ENCODE measurements at regions of chr1 and their contacts with region 1.

Region 1: DNA sequence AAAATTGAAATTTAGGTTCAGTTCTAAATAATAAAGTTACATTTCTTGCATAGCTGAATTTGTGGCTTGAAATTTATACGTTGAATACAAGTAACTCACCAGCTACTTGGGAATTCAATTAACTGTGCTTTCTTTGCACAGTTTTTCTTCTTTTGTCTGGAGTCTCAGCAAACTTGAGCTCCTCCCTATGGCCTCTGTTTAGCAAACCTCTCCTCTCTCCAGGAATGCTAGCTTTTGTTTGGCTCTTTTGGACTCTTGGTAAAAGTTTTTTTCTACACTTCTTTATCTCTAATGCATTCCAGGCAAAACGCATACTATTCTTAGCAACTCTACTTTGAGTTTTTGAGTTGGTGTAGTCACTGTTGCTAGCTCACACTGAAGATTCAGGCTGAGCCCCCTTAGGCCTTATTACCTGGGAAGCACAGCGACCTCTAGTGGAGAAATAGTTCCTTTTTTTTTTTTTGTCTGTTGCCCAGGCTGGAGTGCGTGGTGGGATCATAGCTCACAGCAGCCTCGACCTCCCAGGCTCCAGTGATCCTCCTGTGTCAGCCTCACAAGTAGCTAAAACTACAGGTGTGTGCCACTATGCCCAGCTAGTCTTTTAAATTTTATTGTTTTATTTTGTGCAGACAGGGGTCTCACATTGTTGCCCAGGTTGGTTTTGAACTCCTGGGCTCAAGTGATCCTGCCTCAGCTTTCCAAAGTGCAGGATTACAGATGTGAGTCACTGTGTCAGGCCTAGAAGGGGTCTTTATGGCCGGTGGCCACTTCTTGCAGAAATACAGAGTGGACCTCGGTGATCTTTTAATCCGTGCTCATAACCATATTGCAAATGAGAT is 61.7 kb downstream of the CASQ2 start:
- DNase-seq: peak; percentile 26
- H3K4me3 ChIP-seq: no peak overlapping the region
- H3K27ac ChIP-seq: no peak overlapping the region
- H3K27me3 ChIP-seq: peaks cover 9% of the 10 kb centered on the region
- CTCF ChIP-seq: peak; percentile 74

Region 2: DNA sequence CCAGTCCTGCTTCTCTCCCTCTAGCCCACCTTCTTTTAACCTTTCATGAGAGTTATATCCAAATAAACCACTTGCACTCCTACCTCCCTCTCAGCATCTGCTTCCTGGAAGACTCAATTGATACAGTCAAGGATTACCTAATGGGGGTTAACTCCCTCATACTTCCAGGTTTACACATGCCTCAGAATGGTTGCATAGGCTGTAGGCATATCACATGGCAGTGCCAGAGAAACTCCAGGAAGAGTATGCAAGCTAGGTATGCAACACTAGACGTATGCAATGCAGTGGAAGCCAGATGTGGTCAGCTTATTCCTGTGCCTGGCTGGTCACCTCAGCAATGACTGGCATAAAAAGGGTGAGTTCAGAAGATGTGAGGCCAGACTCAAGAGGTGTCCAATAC is 97.8 kb before region 1 on chr1:
- CTCF ChIA-PET with region 1: interaction called, 97 read pairs
- POLR2A ChIA-PET with region 1: interaction called, 4 read pairs
- DNase-seq: no peak
- H3K4me3 ChIP-seq: no peak overlapping the region
- H3K27ac ChIP-seq: no peak overlapping the region
- H3K27me3 ChIP-seq: peaks cover 16% of the 10 kb centered on the region
- CTCF ChIP-seq: no peak

Region 3: DNA sequence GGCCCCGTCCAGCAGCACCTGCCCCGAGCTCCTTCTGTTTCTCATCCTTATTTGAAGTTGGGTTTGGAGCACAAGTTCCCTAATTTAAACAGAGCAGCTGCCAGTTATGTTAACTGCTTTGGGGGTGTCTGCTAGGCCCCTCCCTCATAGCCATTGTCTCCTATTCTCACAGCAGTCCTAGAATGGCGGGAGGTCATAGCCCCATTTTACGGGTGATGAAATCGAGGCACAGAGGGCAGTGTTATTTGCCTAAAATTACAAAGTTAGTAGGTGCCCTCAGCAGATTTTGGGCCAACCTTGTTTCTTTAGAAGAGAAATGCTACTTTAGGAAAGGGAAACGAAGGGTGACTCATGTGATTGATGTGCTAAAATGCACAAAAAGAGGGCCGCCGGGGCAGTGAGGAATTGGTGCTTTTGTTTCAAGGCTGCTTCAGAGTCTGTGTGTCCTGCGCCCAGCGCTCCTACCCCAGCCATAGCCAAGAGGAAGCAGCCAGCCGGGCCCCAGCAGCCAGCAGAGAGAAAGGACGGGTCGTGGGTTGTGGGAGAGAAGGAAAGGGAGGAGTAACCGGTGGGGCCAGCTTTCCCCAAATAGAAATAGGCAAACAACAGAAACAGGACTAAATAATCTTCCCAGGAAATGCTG is 52.0 kb before region 1 on chr1:
- CTCF ChIA-PET with region 1: interaction called, 16 read pairs
- POLR2A ChIA-PET with region 1: no interaction called
- DNase-seq: no peak
- H3K4me3 ChIP-seq: no peak overlapping the region
- H3K27ac ChIP-seq: no peak overlapping the region
- H3K27me3 ChIP-seq: no peaks in the 10 kb centered on the region
- CTCF ChIP-seq: no peak

Region 4: GRCh38 chr1:115679141-115679611 is 27.6 kb before region 1 on chr1:
- CTCF ChIA-PET with region 1: interaction called, 28 read pairs
- POLR2A ChIA-PET with region 1: no interaction called
- DNase-seq: peak; percentile 30
- H3K4me3 ChIP-seq: no peak overlapping the region
- H3K27ac ChIP-seq: peak overlapping the region; percentile 33
- H3K27me3 ChIP-seq: no peaks in the 10 kb centered on the region
- CTCF ChIP-seq: no peak

Region 5: DNA sequence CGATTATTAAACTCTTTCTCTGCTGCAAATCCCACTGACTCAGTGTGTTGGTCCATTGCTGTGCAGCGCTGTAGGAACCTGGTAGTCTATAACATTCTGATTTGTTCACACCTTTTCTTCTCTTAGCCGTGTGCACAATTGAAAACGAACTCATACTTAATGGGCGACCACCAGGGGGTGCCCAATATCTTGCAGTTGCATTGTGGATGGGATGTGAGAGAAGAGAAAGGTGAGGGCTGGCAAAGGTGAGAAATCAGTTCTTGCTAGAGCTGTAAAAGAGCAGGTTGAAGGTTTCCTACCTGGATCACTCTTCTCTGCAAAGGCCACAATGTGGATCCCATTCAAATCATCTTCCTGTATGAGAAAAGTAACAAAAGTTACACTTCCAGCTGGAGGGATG is 10.7 kb after region 1 on chr1:
- CTCF ChIA-PET with region 1: interaction called, 73 read pairs
- POLR2A ChIA-PET with region 1: no interaction called
- DNase-seq: no peak
- H3K4me3 ChIP-seq: no peak overlapping the region
- H3K27ac ChIP-seq: no peak overlapping the region
- H3K27me3 ChIP-seq: peaks cover 5% of the 10 kb centered on the region
- CTCF ChIP-seq: peak; percentile 53

Region 6: GRCh38 chr1:115764541-115764940 is 57.7 kb after region 1 on chr1:
- CTCF ChIA-PET with region 1: interaction called, 63 read pairs
- POLR2A ChIA-PET with region 1: no interaction called
- DNase-seq: no peak
- H3K4me3 ChIP-seq: no peak overlapping the region
- H3K27ac ChIP-seq: no peak overlapping the region
- H3K27me3 ChIP-seq: peaks cover 10% of the 10 kb centered on the region
- CTCF ChIP-seq: peak; percentile 52

Region 7: GRCh38 chr1:115949156-115949555 is 242.3 kb after region 1 on chr1:
- CTCF ChIA-PET with region 1: no interaction called
- POLR2A ChIA-PET with region 1: no interaction called
- DNase-seq: no peak
- H3K4me3 ChIP-seq: no peak overlapping the region
- H3K27ac ChIP-seq: no peak overlapping the region
- H3K27me3 ChIP-seq: no peaks in the 10 kb centered on the region
- CTCF ChIP-seq: no peak

Region 8: DNA sequence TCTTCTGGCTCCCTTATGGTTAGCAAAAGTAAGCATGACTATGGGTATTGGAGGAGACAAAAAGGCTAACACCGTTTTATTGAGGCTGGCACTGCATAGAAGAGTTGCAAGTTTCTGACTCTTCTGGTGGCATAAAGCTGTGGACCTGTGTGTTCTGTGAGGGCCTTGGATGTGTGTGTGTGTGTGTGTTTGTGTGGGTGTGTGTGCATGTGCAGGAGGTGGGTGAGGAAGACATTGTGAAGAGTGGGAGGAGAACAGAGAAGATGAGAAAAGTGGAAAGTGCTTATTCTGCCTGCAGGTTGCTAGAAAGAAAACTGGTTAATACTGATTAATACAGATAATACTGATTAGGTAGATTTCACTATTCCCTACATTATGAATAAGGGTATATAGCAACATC is 282.1 kb after region 1 on chr1:
- CTCF ChIA-PET with region 1: no interaction called
- POLR2A ChIA-PET with region 1: no interaction called
- DNase-seq: no peak
- H3K4me3 ChIP-seq: no peak overlapping the region
- H3K27ac ChIP-seq: no peak overlapping the region
- H3K27me3 ChIP-seq: no peaks in the 10 kb centered on the region
- CTCF ChIP-seq: no peak